ENCODE measurements at regions of chr15 and their contacts with region 1.

Region 1: GRCh38 chr15:77821188-77821958 is 188.7 kb upstream of the LINGO1 start:
- H3K4me3 ChIP-seq: no peak overlapping the region
- H3K27ac ChIP-seq: no peak overlapping the region
- H3K4me1 ChIP-seq: no peaks in the 10 kb centered on the region
- CTCF ChIP-seq: peak; percentile 78

Region 2: GRCh38 chr15:77617476-77618230 is 203.7 kb before region 1 on chr15:
- CTCF ChIA-PET with region 1: interaction called, 11 read pairs
- POLR2A ChIA-PET with region 1: no interaction called
- H3K4me3 ChIP-seq: no peak overlapping the region
- H3K27ac ChIP-seq: no peak overlapping the region
- H3K4me1 ChIP-seq: no peaks in the 10 kb centered on the region
- CTCF ChIP-seq: 0 out of 2 replicates have a peak, but pooled peaks have one; percentile 43

Region 3: DNA sequence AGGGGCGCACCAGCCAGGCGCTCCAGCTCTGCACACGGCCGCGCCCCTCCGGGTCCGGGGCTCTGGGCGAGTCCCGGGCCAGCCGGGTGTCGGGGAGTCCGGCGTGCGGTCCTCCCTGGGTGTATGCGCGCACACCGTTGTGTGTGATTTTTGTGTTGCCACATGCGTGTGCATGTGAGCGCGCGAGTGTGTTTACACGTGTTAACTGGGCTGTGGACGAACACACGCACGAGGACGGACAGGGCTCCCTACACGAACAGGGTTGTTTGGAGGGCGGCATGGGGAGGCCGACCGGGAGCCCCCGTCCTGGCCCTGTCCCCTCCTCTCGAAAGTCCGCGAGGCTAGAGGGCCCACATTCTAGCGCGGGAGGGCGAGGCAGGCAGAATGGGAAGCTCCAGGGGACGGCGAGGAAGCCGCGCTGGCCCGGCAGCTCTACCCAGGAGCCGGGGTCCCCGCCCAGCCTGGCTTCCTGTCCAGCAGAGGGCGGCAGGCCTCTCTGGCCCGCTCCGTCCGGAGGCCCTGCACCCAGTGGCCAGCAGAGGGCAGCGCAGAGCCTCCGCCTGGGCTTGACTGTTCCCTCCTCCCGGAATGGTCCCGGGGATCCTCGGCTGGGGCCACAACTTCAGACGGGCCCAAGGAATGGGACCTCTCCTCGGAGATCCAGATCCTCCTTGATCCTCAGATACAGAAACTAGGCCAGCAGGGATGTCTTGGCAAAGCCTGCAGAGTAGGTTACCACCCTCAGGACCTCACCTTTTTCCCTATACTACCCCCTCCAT is 188.1 kb before region 1 on chr15:
- CTCF ChIA-PET with region 1: interaction called, 68 read pairs
- POLR2A ChIA-PET with region 1: no interaction called
- H3K4me3 ChIP-seq: peak overlapping the region; percentile 31
- H3K27ac ChIP-seq: peak overlapping the region; percentile 7; the same call in 1 of the 2 replicates
- H3K4me1 ChIP-seq: no peaks in the 10 kb centered on the region; the same call in 1 of the 2 replicates
- CTCF ChIP-seq: peak; percentile 100

Region 4: GRCh38 chr15:77650265-77650664 is 171.1 kb before region 1 on chr15:
- CTCF ChIA-PET with region 1: interaction called, 37 read pairs
- POLR2A ChIA-PET with region 1: interaction called, 3 read pairs
- H3K4me3 ChIP-seq: no peak overlapping the region
- H3K27ac ChIP-seq: no peak overlapping the region
- H3K4me1 ChIP-seq: no peaks in the 10 kb centered on the region
- CTCF ChIP-seq: 0 out of 2 replicates have a peak, but pooled peaks have one; percentile 41

Region 5: DNA sequence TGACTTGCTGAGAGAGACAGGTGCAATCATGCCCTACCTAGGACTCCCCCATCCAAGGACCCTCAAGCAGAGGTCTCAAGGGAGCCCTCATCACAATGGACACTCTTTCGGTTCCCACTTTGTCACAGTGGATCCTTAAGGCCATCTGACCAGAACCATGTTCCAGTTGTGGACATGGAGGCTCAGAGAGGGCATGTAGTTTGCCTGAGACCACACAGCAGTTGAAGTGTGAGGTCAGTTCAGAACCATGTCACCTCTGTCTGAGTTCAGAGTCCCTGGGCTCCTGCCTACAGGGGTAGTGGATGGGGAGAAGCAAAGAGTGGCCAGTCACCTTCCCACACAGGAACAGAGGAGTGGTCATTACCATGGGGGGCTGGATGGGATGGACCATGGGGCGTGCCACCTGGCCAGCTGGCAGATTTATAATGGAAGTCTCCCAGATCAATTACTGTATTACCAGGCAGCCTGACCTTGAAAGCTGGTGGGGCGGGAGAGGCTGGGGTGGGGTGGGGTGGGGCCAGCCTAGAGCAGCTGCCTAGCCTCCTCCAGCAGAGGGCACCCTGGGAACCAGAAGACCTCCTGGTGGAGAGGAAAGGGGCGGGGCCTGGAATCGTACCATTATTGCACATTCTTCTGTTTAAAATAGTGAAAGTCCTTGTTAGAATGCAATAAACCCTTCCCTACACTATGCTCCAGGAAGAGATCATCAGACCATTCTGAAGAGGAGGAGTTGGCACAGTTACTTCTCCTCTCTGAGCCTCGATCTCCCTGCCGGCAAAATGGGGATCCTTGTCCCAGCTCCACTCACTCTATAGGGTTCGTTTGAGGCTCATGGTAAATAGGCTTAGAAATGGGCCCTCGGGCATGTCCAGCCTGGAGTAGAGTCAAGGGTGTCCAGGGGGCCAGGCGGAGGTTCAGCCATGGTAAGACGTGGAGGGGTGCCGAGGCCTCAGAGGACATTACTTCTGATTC is 161.7 kb before region 1 on chr15:
- CTCF ChIA-PET with region 1: interaction called, 50 read pairs
- POLR2A ChIA-PET with region 1: no interaction called
- H3K4me3 ChIP-seq: no peak overlapping the region
- H3K27ac ChIP-seq: no peak overlapping the region
- H3K4me1 ChIP-seq: no peaks in the 10 kb centered on the region
- CTCF ChIP-seq: no peak

Region 6: GRCh38 chr15:77784395-77785292 is 36.7 kb before region 1 on chr15:
- CTCF ChIA-PET with region 1: interaction called, 11 read pairs
- POLR2A ChIA-PET with region 1: no interaction called
- H3K4me3 ChIP-seq: no peak overlapping the region
- H3K27ac ChIP-seq: no peak overlapping the region
- H3K4me1 ChIP-seq: no peaks in the 10 kb centered on the region
- CTCF ChIP-seq: no peak

Region 7: DNA sequence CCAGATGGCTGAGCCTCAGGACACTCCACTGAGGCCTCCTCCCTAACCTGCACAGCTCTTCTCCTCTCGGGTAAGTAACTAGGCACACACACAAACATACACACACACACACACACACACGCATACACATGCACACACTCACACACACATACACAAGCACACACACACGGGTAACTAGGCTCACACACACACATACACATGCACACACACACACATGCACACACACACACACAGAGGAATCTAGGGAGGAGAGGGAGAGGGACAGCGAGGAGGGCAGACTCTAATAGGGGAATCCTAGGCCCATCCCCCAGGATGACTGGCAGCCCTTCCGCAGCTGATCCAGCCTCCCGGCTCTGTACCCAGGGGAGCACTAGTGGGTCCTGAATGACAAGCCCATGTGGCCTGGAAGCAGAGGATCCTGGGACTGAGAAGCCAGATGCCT is 11.2 kb before region 1 on chr15:
- CTCF ChIA-PET with region 1: interaction called, 12 read pairs
- POLR2A ChIA-PET with region 1: no interaction called
- H3K4me3 ChIP-seq: no peak overlapping the region
- H3K27ac ChIP-seq: no peak overlapping the region
- H3K4me1 ChIP-seq: no peaks in the 10 kb centered on the region
- CTCF ChIP-seq: no peak

Region 8: GRCh38 chr15:77921664-77922063 is 100.3 kb after region 1 on chr15:
- CTCF ChIA-PET with region 1: no interaction called
- POLR2A ChIA-PET with region 1: no interaction called
- H3K4me3 ChIP-seq: no peak overlapping the region
- H3K27ac ChIP-seq: no peak overlapping the region
- H3K4me1 ChIP-seq: no peaks in the 10 kb centered on the region
- CTCF ChIP-seq: no peak

Region 9: GRCh38 chr15:78065284-78065872 is 244.0 kb after region 1 on chr15:
- CTCF ChIA-PET with region 1: no interaction called
- POLR2A ChIA-PET with region 1: no interaction called
- H3K4me3 ChIP-seq: no peak overlapping the region
- H3K27ac ChIP-seq: peak overlapping the region; percentile 49; the same call in 1 of the 2 replicates
- H3K4me1 ChIP-seq: peaks cover 57% of the 10 kb centered on the region
- CTCF ChIP-seq: no peak